ENCODE measurements at regions of chr4 and their contacts with region 1.

Region 1: DNA sequence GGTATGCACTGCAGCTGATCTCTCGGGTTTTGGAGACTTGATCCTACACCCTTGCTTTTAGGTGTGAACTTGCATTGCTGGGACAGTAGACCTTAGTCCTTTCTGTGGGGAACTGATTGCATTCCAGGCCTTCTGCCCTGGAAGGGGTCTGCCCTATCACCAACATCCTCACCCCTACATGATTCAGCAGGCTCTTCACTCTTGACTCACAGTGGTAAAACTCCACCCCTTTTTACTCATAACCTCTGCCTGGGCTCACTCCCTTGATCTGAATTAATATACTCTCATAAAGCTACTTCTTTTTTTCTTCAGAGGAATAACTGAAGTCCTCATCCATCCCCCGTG is 6.6 kb upstream of the DDX60L start:
- DNase-seq: peak; percentile 87
- H3K4me3 ChIP-seq: no peak overlapping the region
- H3K27ac ChIP-seq: peak overlapping the region; percentile 83
- H3K4me1 ChIP-seq: peaks cover 35% of the 10 kb centered on the region
- H3K27me3 ChIP-seq: no peaks in the 10 kb centered on the region
- CTCF ChIP-seq: no peak

Region 2: DNA sequence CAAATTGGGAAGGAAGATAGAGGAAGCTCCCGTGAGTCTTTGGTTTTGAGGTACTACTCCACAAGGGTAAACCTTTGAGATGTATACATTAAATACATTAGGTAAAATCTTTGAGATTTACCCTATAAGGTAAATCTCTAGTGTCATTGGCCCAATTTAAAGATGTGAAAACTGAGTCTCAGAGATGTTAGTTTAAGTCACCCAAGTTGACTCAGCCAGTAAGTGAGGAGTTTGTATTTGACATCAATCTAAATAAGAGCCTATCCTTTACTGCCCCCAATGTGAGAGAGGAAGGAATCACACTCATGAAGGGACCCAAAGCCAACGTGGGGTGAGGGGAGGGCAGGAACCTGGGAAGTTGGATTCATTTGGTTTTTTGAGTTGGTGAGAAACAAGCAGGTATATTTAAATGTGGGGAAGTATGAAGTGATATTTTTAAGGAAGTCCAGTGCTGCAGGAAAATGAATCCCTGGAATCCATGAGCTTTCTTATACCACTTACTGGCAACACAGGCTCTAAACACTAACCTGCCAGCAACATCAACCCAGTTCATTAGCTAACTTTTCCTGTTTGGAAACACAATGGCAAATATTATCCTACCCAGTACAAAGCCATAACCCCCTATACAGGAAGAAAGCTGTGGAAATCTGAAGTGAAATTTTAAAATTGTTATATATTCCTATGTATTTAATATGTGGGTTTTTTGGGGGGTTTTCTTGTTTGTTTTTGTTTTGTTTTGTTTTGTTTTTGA is 65.2 kb after region 1 on chr4:
- CTCF ChIA-PET with region 1: no interaction called
- dilution Hi-C with region 1: no loop called
- in situ Hi-C with region 1: no loop called
- intact Hi-C with region 1: loop called (anchors 5 kb)
- DNase-seq: no peak
- H3K4me3 ChIP-seq: no peak overlapping the region
- H3K27ac ChIP-seq: peak overlapping the region; percentile 93
- H3K4me1 ChIP-seq: peaks cover 24% of the 10 kb centered on the region
- H3K27me3 ChIP-seq: no peaks in the 10 kb centered on the region
- CTCF ChIP-seq: no peak